ENCODE measurements at regions of chr19 and their contacts with region 1.

Region 1: DNA sequence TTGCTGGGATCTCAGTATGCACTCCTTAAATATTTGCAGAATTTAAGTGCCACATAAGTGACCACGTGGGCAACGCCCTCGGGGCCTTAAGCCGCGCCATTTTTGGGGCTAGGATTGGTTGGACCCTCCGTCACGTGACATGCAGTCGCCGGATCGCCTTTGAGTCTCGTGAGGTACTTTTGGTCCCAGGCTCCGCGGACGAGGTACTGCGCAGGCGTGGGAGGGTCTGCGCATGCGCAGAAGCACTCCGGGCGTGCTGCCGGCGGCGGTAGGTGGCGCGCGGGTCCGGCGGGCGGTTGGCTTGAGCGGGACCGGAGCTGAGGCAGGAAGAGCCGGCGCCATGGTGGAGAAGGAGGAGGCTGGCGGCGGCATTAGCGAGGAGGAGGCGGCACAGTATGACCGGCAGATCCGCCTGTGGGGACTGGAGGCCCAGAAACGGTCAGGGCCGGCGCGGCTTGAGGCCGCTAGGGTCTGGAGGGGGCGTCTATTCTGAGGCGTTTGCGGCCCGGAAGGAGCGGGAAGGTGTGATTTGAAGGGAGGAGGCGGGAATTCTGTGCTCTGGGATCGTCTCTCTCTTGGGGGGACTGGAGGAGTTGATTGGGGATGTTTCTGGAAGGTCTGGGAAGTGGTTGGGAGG is at the start of gene SAE1:
- DNase-seq: peak; percentile 88 to 91 (median 90)
- H3K4me3 ChIP-seq: peak within 1 kb of the TSS; percentile 82 to 89
- H3K4me3 Mint-ChIP-seq: peak within 1 kb of the TSS; percentile 97 to 100 (median 100)
- H3K27ac ChIP-seq: peak within 1 kb of the TSS; percentile 73
- H3K27ac Mint-ChIP-seq: peak within 1 kb of the TSS; percentile 93 to 99 (median 98)
- H3K4me1 ChIP-seq: peaks cover 43% of the 10 kb centered on the region
- H3K4me1 Mint-ChIP-seq: peaks cover 33 to 55% (median 44%) of the 10 kb centered on the region in 4 donors
- H3K27me3 ChIP-seq: no peaks in the 10 kb centered on the region
- H3K27me3 Mint-ChIP-seq: no peaks in the 10 kb centered on the region
- total RNA-seq, gene SAE1: 35.3 to 36.0 TPM

Region 2: DNA sequence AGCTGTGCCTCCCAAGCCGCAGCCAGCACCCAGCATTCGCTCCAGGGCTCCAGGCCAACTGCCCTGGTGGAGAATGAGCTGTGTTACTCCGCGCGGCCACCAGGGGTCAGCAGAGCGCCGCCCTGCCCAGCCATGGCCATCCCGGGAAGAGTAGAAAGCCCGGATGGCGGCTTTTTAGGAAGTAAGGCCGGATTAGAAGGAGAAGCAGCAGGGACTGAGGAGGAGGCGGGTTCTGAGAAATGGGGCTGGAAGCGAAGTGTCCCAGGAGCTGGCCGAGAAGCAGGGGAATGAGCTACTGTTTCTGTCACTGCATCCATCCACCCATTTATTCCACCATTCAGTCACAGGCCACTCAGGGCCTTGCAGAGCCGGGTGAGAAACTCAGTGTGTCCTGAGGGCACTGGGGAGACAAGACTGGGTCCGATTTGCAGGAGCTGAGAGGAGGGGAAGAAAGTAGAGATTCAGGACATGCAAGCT is 117.6 kb before region 1 on chr19:
- CTCF ChIA-PET with region 1: interaction called, 11 read pairs
- POLR2A ChIA-PET with region 1: no interaction called
- intact Hi-C with region 1: no loop called
- DNase-seq: peak; percentile 51 to 62 (median 53)
- H3K4me3 ChIP-seq: no peak overlapping the region
- H3K4me3 Mint-ChIP-seq: peak overlapping the region in 6 of 8 donors; percentile 6 to 65 (median 30)
- H3K27ac ChIP-seq: no peak overlapping the region
- H3K27ac Mint-ChIP-seq: peak overlapping the region in 2 of 7 donors; percentile 53 to 57
- H3K4me1 ChIP-seq: peaks cover 7% of the 10 kb centered on the region
- H3K4me1 Mint-ChIP-seq: peaks cover 8 to 9% (median 9%) of the 10 kb centered on the region in 4 donors
- H3K27me3 ChIP-seq: no peaks in the 10 kb centered on the region
- H3K27me3 Mint-ChIP-seq: peaks cover 5 to 10% of the 10 kb centered on the region in 2 donors

Region 3: DNA sequence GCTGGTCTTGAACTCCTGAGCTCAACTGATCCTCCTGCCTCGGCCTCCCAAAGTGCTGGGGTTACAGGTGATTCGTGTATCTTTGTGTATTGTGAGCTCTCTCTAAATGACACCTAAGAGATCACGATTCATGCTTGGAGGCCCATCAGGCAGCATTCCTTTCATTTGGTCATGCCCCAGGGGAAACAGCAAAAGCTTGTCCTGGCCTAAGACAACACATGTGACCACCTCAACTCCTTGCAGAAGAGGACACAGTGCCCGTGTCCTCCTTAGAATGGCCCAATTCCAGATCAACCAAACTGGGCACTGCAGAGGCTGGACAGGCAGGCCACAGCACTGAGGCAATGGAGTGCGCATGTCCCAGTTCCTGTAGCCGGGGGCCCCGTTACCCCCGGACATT is 49.6 kb before region 1 on chr19:
- CTCF ChIA-PET with region 1: interaction called, 123 read pairs
- POLR2A ChIA-PET with region 1: interaction called, 16 read pairs
- intact Hi-C with region 1: loop called (anchors 1 kb)
- DNase-seq: no peak
- H3K4me3 ChIP-seq: no peak overlapping the region
- H3K4me3 Mint-ChIP-seq: no peak overlapping the region
- H3K27ac ChIP-seq: no peak overlapping the region
- H3K27ac Mint-ChIP-seq: peak overlapping the region in 1 of 7 donors; percentile 24
- H3K4me1 ChIP-seq: no peaks in the 10 kb centered on the region
- H3K4me1 Mint-ChIP-seq: peaks cover 0 to 4% (median 0%) of the 10 kb centered on the region in 4 donors
- H3K27me3 ChIP-seq: no peaks in the 10 kb centered on the region
- H3K27me3 Mint-ChIP-seq: no peaks in the 10 kb centered on the region

Region 4: GRCh38 chr19:47152224-47153017 is 21.7 kb after region 1 on chr19:
- CTCF ChIA-PET with region 1: interaction called, 16 read pairs
- POLR2A ChIA-PET with region 1: interaction called, 8 read pairs
- intact Hi-C with region 1: loop called (anchors 2 kb)
- DNase-seq: no peak
- H3K4me3 ChIP-seq: no peak overlapping the region
- H3K4me3 Mint-ChIP-seq: no peak overlapping the region
- H3K27ac ChIP-seq: no peak overlapping the region
- H3K27ac Mint-ChIP-seq: no peak overlapping the region
- H3K4me1 ChIP-seq: peaks cover 47% of the 10 kb centered on the region
- H3K4me1 Mint-ChIP-seq: peaks cover 26 to 65% (median 43%) of the 10 kb centered on the region in 4 donors
- H3K27me3 ChIP-seq: no peaks in the 10 kb centered on the region
- H3K27me3 Mint-ChIP-seq: no peaks in the 10 kb centered on the region

Region 5: GRCh38 chr19:47225746-47226425 is 95.2 kb after region 1 on chr19:
- CTCF ChIA-PET with region 1: interaction called, 3 read pairs
- POLR2A ChIA-PET with region 1: interaction called, 15 read pairs
- intact Hi-C with region 1: no loop called
- DNase-seq: peak; percentile 83 to 87 (median 84)
- H3K4me3 ChIP-seq: peak overlapping the region in 1 of 2 donors; percentile 52
- H3K4me3 Mint-ChIP-seq: peak overlapping the region; percentile 22 to 79 (median 64)
- H3K27ac ChIP-seq: peak overlapping the region; percentile 80
- H3K27ac Mint-ChIP-seq: peak overlapping the region; percentile 74 to 96 (median 89)
- H3K4me1 ChIP-seq: peaks cover 41% of the 10 kb centered on the region
- H3K4me1 Mint-ChIP-seq: peaks cover 5 to 20% (median 11%) of the 10 kb centered on the region in 4 donors
- H3K27me3 ChIP-seq: no peaks in the 10 kb centered on the region
- H3K27me3 Mint-ChIP-seq: no peaks in the 10 kb centered on the region

Region 6: GRCh38 chr19:47514869-47515588 is 384.3 kb after region 1 on chr19 and contains the start of gene NAPA:
- CTCF ChIA-PET with region 1: no interaction called
- POLR2A ChIA-PET with region 1: no interaction called
- intact Hi-C with region 1: loop called (anchors 2 kb)
- DNase-seq: peak; percentile 100
- H3K4me3 ChIP-seq: peak within 1 kb of the TSS; percentile 95 to 98
- H3K4me3 Mint-ChIP-seq: peak within 1 kb of the TSS; percentile 97 to 99 (median 98)
- H3K27ac ChIP-seq: peak within 1 kb of the TSS; percentile 97
- H3K27ac Mint-ChIP-seq: peak within 1 kb of the TSS; percentile 97 to 99 (median 98)
- H3K4me1 ChIP-seq: peaks cover 64% of the 10 kb centered on the region
- H3K4me1 Mint-ChIP-seq: peaks cover 50 to 87% (median 66%) of the 10 kb centered on the region in 4 donors
- H3K27me3 ChIP-seq: no peaks in the 10 kb centered on the region
- H3K27me3 Mint-ChIP-seq: no peaks in the 10 kb centered on the region
- total RNA-seq, gene NAPA: 84.1 to 88.1 TPM

Region 7: GRCh38 chr19:48203732-48204628 is 1073.3 kb after region 1 on chr19:
- CTCF ChIA-PET with region 1: no interaction called
- POLR2A ChIA-PET with region 1: no interaction called
- intact Hi-C with region 1: no loop called
- DNase-seq: peak; percentile 87 to 93 (median 87)
- H3K4me3 ChIP-seq: peak overlapping the region; percentile 70 to 91
- H3K4me3 Mint-ChIP-seq: no peak overlapping the region
- H3K27ac ChIP-seq: peak overlapping the region; percentile 70
- H3K27ac Mint-ChIP-seq: no peak overlapping the region
- H3K4me1 ChIP-seq: peaks cover 14% of the 10 kb centered on the region
- H3K4me1 Mint-ChIP-seq: peaks cover 9 to 19% (median 12%) of the 10 kb centered on the region in 4 donors
- H3K27me3 ChIP-seq: no peaks in the 10 kb centered on the region
- H3K27me3 Mint-ChIP-seq: no peaks in the 10 kb centered on the region